HAP-1 (cell line): ENCODE measurements at regions of chr9 and their contacts with region 1.

Region 1: GRCh38 chr9:105046907-105047741 is 119.2 kb upstream of the ABCA1 start:
- DNase-seq: no peak
- H3K4me3 ChIP-seq: no peak overlapping the region
- H3K4me1 ChIP-seq: peaks cover 9% of the 10 kb centered on the region
- H3K27me3 ChIP-seq: no peaks in the 10 kb centered on the region

Region 2: GRCh38 chr9:104675611-104676010 is 371.5 kb before region 1 on chr9:
- in situ Hi-C with region 1: no loop called
- DNase-seq: no peak
- H3K4me3 ChIP-seq: no peak overlapping the region
- H3K4me1 ChIP-seq: no peaks in the 10 kb centered on the region
- H3K27me3 ChIP-seq: no peaks in the 10 kb centered on the region

Region 3: GRCh38 chr9:104968025-104968982 is 78.8 kb before region 1 on chr9:
- in situ Hi-C with region 1: no loop called
- DNase-seq: peak; percentile 68 to 91
- H3K4me3 ChIP-seq: peak overlapping the region; percentile 96
- H3K4me1 ChIP-seq: peaks cover 4% of the 10 kb centered on the region
- H3K27me3 ChIP-seq: no peaks in the 10 kb centered on the region

Region 4: GRCh38 chr9:104987743-104988142 is 59.4 kb before region 1 on chr9:
- in situ Hi-C with region 1: loop called (anchors 10 kb)
- DNase-seq: no peak
- H3K4me3 ChIP-seq: no peak overlapping the region
- H3K4me1 ChIP-seq: peaks cover 4% of the 10 kb centered on the region; the same call in 1 of the 2 replicates
- H3K27me3 ChIP-seq: no peaks in the 10 kb centered on the region